T-cell (primary cell): ENCODE measurements at regions of chr18 and their contacts with region 1.

Region 1: DNA sequence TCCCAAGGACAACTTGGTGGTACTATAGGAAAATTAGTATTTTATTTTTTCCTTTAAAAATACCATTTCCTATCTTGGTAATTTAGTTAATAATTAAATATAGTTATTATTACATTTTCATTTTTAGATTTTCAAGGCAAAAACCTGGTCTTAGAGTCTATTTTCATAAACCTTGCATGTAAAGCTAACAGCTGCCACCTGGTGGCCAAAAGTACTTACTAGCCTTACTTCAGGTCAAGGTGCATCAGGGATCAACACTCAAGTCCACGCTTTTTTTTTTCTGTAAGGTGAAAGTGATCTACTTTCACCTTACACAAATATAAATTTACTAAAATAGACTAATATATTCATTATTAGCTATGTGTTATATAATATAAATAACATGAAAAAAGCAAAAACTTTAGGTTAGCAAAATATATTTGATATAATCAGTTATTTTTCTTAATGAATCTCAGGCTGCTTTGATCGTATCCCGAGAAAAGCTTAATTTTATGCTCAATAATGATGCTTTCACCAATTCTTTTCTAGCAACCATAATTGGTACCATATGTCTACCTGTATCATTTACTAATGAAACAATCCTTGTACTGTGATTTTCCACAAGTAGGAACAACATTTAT is 62.5 kb downstream of the RELCH start:
- DNase-seq: peak; percentile 17 to 84 (median 66)
- ATAC-seq: peak; percentile 49 to 65 (median 59)
- H3K4me3 ChIP-seq: no peak overlapping the region
- H3K4me3 Mint-ChIP-seq: no peak overlapping the region
- H3K27ac ChIP-seq: no peak overlapping the region
- H3K27ac Mint-ChIP-seq: no peak overlapping the region
- H3K4me1 ChIP-seq: no peaks in the 10 kb centered on the region
- H3K4me1 Mint-ChIP-seq: no peaks in the 10 kb centered on the region
- H3K27me3 ChIP-seq: no peaks in the 10 kb centered on the region
- H3K27me3 Mint-ChIP-seq: no peaks in the 10 kb centered on the region

Region 2: GRCh38 chr18:62186774-62187542 is 62.6 kb before region 1 on chr18 and contains the starts of genes PIGN and RELCH:
- CTCF ChIA-PET with region 1: interaction called, 35 to 96 read pairs
- POLR2A ChIA-PET with region 1: interaction called in 1 of 2 experiments, 5 read pairs
- DNase-seq: peak; percentile 82 to 98 (median 96)
- ATAC-seq: peak; percentile 91 to 95 (median 94)
- H3K4me3 ChIP-seq: peak within 1 kb of the TSS; percentile 95 to 99
- H3K4me3 Mint-ChIP-seq: peak within 1 kb of the TSS; percentile 99
- H3K27ac ChIP-seq: peak within 1 kb of the TSS; percentile 69
- H3K27ac Mint-ChIP-seq: peak within 1 kb of the TSS; percentile 94 to 96
- H3K4me1 ChIP-seq: peaks cover 23 to 27% of the 10 kb centered on the region in 2 experiments
- H3K4me1 Mint-ChIP-seq: peaks cover 63 to 64% (median 64%) of the 10 kb centered on the region in 3 donors
- H3K27me3 ChIP-seq: no peaks in the 10 kb centered on the region
- H3K27me3 Mint-ChIP-seq: no peaks in the 10 kb centered on the region
- total RNA-seq, gene PIGN: 19.5 to 24.0 (median 21.8) TPM
- total RNA-seq, gene RELCH: 46.5 to 68.1 (median 51.5) TPM

Region 3: DNA sequence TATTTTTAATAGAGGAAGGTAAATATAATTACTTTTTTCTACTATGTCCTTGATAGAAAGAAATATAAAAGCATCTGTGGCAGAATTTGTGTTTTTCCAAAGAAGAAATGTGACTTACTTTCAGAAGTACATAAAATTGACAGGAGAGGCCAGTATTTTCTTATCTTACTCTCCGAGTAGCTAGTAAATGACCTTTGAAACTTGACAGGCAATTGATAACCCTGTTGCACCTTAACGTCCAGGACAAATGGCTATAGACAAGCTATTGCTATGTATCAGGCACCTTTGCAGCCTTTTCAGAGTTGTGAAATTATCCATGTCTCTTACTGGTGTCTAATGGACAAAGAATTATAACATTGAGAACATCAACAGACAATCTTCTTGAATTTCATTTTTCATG is 12.5 kb after region 1 on chr18:
- CTCF ChIA-PET with region 1: interaction called, 5 to 13 read pairs
- POLR2A ChIA-PET with region 1: no interaction called
- DNase-seq: no peak
- ATAC-seq: no peak
- H3K4me3 ChIP-seq: no peak overlapping the region
- H3K4me3 Mint-ChIP-seq: no peak overlapping the region
- H3K27ac ChIP-seq: no peak overlapping the region
- H3K27ac Mint-ChIP-seq: no peak overlapping the region
- H3K4me1 ChIP-seq: no peaks in the 10 kb centered on the region
- H3K4me1 Mint-ChIP-seq: peaks cover 6 to 7% (median 6%) of the 10 kb centered on the region in 3 donors
- H3K27me3 ChIP-seq: no peaks in the 10 kb centered on the region
- H3K27me3 Mint-ChIP-seq: no peaks in the 10 kb centered on the region